PC-9 (cell line): ENCODE measurements at regions of chr9 and their contacts with region 1.

Region 1: GRCh38 chr9:133184962-133185361 is 21.2 kb upstream of the GBGT1 start:
- DNase-seq: peak; percentile 50 to 65
- H3K4me3 ChIP-seq: no peak overlapping the region
- H3K27ac ChIP-seq: no peak overlapping the region
- H3K4me1 ChIP-seq: no peaks in the 10 kb centered on the region
- H3K27me3 ChIP-seq: peaks cover 54% of the 10 kb centered on the region
- CTCF ChIP-seq: peak; percentile 77

Region 2: GRCh38 chr9:132804576-132805295 is 380.2 kb before region 1 on chr9:
- CTCF ChIA-PET with region 1: no interaction called
- POLR2A ChIA-PET with region 1: no interaction called
- intact Hi-C with region 1: no loop called
- DNase-seq: no peak
- H3K4me3 ChIP-seq: no peak overlapping the region
- H3K27ac ChIP-seq: no peak overlapping the region
- H3K4me1 ChIP-seq: 0 out of 2 replicates have a peak, but pooled peaks cover 4% of the 10 kb centered on the region
- H3K27me3 ChIP-seq: peaks cover 3% of the 10 kb centered on the region; the same call in 1 of the 2 replicates
- CTCF ChIP-seq: no peak

Region 3: DNA sequence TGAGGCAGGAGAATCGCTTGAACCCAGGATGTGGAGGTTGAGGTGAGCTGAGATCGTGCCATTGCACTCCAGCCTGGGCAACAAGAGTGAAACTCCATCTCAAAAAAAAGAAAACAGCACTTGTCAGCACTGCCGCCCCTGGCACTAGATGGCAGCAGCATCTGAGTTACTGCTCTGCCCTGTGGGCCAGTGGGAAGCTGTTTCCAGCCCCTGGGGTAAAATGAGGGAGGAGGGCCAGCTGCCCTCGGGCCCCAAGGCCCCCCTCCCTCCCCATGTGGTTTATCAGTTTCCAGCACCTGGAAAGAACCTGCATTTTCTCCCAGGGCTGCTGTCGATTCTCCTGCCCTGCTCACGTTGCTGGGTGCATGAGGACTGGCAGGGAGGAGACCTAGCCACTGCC is 136.4 kb before region 1 on chr9:
- CTCF ChIA-PET with region 1: no interaction called
- POLR2A ChIA-PET with region 1: no interaction called
- intact Hi-C with region 1: loop called (anchors 2 kb)
- DNase-seq: peak in 1 of 2 experiments; percentile 34
- H3K4me3 ChIP-seq: no peak overlapping the region
- H3K27ac ChIP-seq: no peak overlapping the region
- H3K4me1 ChIP-seq: no peaks in the 10 kb centered on the region
- H3K27me3 ChIP-seq: no peaks in the 10 kb centered on the region
- CTCF ChIP-seq: peak; percentile 59

Region 4: DNA sequence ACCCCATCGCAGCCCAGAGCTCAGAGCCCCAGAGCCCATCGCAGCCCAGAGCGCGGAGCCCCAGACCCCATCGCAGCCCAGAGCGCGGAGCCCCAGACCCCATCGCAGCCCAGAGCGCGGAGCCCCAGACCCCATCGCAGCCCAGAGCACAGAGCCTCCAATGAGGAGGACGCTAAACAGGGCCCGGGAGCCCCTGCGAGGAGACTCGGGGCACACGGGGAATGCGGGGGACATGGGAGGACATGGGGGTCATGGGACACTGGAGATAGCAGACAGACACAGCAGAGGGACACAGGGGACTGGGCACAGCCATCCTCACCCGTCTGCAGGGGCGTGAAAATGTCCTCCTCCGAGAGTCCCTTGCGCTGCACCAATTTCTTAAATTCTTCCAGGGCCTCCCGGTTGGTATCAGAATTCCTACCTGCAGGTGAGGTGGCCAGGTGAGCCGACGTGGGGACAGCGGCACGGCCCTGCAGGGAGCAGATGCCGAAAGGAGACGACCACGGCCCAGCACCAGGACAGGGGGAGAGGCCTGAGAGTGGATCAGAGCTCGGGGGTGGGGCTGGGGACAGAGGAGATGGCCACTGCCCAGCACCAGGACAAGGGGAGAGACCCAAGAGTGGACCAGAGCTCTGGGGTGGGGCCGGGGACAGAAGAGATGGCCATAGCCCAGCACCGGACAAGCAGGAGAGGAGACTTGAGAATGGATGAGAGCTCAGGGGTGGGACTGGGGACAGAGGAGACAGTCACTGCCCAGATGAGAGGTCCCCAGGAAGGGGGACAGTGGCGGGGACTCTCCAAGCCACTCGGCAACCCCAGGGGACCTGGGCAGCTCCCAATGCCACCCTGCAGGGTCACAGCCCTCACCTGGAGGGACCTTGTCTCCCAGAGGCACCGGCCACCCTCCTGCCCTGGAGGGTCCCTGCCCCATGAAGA is 21.3 kb after region 1 on chr9:
- CTCF ChIA-PET with region 1: interaction called, 10 read pairs
- POLR2A ChIA-PET with region 1: no interaction called
- intact Hi-C with region 1: no loop called
- DNase-seq: no peak
- H3K4me3 ChIP-seq: no peak overlapping the region
- H3K27ac ChIP-seq: no peak overlapping the region
- H3K4me1 ChIP-seq: no peaks in the 10 kb centered on the region
- H3K27me3 ChIP-seq: peaks cover 43% of the 10 kb centered on the region
- CTCF ChIP-seq: no peak

Region 5: DNA sequence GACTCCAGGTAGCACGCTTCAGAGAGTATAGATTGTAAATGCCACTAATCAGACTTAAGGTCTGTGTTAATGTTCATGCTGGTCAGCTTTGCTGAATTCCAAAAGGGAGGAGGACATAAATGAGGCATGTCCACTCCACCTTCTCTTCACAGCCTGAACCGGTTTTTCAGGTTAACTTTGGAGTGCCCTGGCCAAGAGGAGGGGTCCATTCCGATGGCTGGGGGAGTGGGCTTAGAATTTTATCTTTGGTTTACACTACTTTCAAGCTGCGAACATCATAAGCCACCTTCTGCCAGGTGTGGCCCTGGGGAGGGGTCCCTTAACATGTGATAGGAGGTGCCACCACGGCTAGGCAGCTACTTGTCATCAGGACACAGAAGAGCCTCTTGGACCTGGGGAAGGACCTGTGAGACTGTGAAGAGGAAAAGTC is 65.8 kb after region 1 on chr9:
- CTCF ChIA-PET with region 1: interaction called, 17 read pairs
- POLR2A ChIA-PET with region 1: interaction called, 6 read pairs
- intact Hi-C with region 1: no loop called
- DNase-seq: peak; percentile 59 to 70
- H3K4me3 ChIP-seq: no peak overlapping the region
- H3K27ac ChIP-seq: peak overlapping the region; percentile 71
- H3K4me1 ChIP-seq: peaks cover 48% of the 10 kb centered on the region
- H3K27me3 ChIP-seq: no peaks in the 10 kb centered on the region
- CTCF ChIP-seq: no peak

Region 6: DNA sequence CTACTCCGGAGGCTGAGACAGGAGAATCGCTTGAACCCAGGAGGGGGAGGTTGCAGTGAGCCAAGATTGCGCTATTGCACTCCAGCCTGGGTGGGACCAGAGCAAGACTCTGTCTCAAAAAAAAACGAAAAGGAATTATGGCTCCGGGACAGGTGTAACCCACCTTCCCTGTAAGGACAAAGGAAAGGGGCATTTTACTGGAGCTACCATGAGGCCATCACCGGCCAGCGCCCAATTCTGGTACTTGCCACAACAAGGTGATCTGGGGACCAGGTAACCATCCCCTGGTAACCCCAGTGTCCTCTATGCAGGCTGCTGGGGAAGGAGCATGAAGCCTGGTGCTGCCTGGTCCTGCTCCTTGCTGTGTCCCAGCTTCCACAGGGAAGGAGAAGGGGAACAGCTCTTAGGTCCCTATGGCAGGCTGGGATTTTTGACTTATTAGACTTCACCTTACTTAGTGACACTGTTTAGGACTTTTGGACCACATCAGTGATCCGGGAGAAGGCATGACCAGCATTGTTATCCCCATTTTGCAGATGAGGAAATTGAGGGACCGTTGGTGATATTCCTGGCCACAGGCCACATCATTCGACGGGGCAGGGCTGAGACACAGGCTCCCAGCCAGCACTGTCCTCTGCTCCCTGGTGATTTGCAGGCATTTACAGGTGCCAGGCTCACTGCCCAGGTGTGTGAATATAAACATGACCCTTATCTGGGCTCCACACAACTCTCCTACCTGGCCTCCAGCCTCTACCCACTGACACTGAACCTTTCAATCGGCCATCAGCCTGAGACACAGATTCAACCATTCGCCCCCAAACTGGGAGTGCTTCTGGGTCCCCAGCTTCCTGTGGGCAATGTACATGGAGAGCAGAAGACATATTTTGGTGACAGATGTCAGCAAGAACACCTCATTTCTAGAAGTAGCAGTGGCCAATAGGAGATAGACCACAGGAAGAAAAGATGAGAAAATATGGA is 116.6 kb after region 1 on chr9:
- CTCF ChIA-PET with region 1: no interaction called
- POLR2A ChIA-PET with region 1: no interaction called
- intact Hi-C with region 1: no loop called
- DNase-seq: no peak
- H3K4me3 ChIP-seq: no peak overlapping the region
- H3K27ac ChIP-seq: no peak overlapping the region
- H3K4me1 ChIP-seq: no peaks in the 10 kb centered on the region
- H3K27me3 ChIP-seq: peaks cover 73% of the 10 kb centered on the region
- CTCF ChIP-seq: no peak

Region 7: GRCh38 chr9:133406480-133407307 is 221.7 kb after region 1 on chr9:
- CTCF ChIA-PET with region 1: interaction called, 5 read pairs
- POLR2A ChIA-PET with region 1: no interaction called
- intact Hi-C with region 1: loop called (anchors 1 kb)
- DNase-seq: peak; percentile 37 to 74
- H3K4me3 ChIP-seq: no peak overlapping the region
- H3K27ac ChIP-seq: no peak overlapping the region
- H3K4me1 ChIP-seq: no peaks in the 10 kb centered on the region
- H3K27me3 ChIP-seq: no peaks in the 10 kb centered on the region
- CTCF ChIP-seq: peak; percentile 89

Region 8: GRCh38 chr9:133499132-133499891 is 314.4 kb after region 1 on chr9:
- CTCF ChIA-PET with region 1: no interaction called
- POLR2A ChIA-PET with region 1: no interaction called
- intact Hi-C with region 1: no loop called
- DNase-seq: no peak
- H3K4me3 ChIP-seq: no peak overlapping the region
- H3K27ac ChIP-seq: no peak overlapping the region
- H3K4me1 ChIP-seq: no peaks in the 10 kb centered on the region
- H3K27me3 ChIP-seq: peaks cover 90% of the 10 kb centered on the region
- CTCF ChIP-seq: no peak